ENCODE measurements at regions of chr3 and their contacts with region 1.

Region 1: DNA sequence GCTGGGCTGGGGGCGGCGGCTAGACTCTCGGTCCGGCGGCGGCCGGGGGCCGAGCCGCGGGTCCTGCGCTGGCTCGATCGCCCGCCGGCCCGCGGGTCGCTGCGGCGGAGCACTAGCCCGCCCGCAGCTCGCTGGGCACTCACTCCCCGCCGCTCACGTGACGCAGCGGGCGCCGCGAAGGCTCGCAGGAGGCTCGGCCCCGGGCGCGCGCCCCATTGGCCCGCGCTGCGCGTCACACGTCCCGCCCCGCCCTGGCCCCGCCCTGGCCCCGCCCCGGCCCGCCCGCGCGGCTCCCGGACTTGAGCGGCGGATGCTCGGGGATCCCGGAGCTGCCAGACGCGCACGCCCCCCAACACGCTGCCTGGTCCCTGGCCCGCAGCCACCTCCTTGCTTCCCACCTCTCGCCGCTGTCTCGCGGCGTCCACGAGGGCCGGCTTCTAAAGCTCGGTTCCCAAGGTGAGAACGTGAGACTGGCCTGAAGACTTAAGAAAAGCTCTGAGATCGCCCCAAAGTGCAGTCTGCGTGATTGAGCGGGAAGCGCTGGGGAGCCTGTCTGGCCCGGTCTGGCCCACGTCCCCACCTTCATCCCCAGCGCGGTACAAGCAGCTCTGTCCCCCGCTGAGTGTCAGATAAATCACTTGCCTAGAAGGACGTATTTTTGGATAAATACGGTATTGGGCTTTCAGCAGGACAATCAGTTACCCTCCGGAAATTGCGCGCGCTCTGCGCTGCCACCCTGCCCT is at the start of gene KLF15:
- DNase-seq: peak; percentile 86 to 96
- H3K4me3 ChIP-seq: peak within 1 kb of the TSS; percentile 60 to 100
- H3K27ac ChIP-seq: peak within 1 kb of the TSS; percentile 94 to 100
- H3K4me1 ChIP-seq: peaks cover 0 to 40% (median 33%) of the 10 kb centered on the region in 4 donors
- H3K27me3 ChIP-seq: peaks cover 0 to 6% of the 10 kb centered on the region in 2 donors
- CTCF ChIP-seq: peak in 1 of 2 experiments; percentile 10

Region 2: DNA sequence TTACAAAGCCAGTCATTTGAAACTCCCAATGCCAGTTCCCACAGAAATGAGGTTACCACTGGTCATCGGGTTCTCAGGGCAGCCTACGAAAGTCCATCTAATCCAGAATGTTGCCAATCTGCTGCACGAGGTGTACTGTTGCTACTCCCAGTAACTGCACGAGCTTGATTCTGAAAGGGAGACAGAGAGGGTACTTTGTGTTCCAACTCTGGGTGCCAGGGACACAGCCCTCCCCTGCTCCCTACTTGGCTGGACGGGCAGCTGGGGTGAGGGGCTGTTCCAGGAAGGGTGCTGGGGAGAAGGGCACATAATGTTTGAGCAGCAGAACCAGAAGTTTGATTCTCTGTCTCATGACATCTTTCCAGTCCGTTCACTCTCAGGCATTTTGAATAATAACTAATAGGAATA is 735.1 kb before region 1 on chr3:
- intact Hi-C with region 1: no loop called
- DNase-seq: peak; percentile 45 to 87
- H3K4me3 ChIP-seq: no peak overlapping the region
- H3K27ac ChIP-seq: peak overlapping the region; percentile 63 to 69
- H3K4me1 ChIP-seq: peaks cover 0 to 19% (median 1%) of the 10 kb centered on the region in 4 donors
- H3K27me3 ChIP-seq: no peaks in the 10 kb centered on the region
- CTCF ChIP-seq: no peak

Region 3: GRCh38 chr3:126267226-126267975 is 90.1 kb before region 1 on chr3:
- intact Hi-C with region 1: loop called (anchors 2 kb)
- DNase-seq: peak; percentile 84 to 96
- H3K4me3 ChIP-seq: peak overlapping the region; percentile 38 to 46
- H3K27ac ChIP-seq: peak overlapping the region; percentile 89 to 92
- H3K4me1 ChIP-seq: peaks cover 24 to 76% (median 56%) of the 10 kb centered on the region in 4 donors
- H3K27me3 ChIP-seq: no peaks in the 10 kb centered on the region
- CTCF ChIP-seq: peak; percentile 22 to 28

Region 4: DNA sequence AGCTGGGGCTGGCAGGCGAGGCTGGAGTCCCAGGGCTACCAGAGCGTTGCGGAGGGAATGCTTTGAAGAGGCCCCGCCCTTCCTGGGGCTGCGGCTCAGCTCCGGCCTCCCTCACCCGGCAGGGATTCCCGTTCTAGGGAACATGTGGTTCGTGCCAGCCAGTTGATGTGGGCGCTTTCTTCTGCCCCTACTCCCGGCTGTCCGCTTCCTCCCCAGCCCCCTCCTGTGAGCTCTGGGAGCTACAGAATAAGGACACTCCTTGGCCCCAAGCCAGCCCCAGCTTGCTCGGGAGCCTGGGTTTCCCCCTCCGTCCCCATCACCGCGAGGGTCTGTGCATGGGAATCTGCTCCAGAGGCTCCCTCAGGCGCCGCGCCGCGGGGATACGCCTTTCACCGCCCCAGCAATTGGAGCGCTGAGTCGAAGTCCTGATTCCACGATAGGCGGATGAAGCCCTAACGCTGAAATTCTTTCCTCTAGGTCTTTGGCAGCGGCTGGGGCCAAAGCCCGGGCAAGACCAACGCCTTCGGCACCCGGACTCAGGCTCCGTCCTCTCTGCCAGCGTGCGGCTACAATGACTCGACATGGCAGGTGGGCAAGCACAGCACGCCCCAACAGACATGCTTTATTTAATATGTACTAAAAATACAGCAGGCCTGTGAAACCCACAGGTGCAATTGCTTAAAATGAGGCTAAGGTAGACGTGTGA is 69.8 kb before region 1 on chr3:
- intact Hi-C with region 1: loop called (anchors 5 kb)
- DNase-seq: peak; percentile 62 to 90
- H3K4me3 ChIP-seq: peak overlapping the region; percentile 51 to 64
- H3K27ac ChIP-seq: peak overlapping the region; percentile 90 to 92
- H3K4me1 ChIP-seq: peaks cover 0 to 37% (median 22%) of the 10 kb centered on the region in 4 donors
- H3K27me3 ChIP-seq: no peaks in the 10 kb centered on the region
- CTCF ChIP-seq: peak in 1 of 2 experiments; percentile 7

Region 5: DNA sequence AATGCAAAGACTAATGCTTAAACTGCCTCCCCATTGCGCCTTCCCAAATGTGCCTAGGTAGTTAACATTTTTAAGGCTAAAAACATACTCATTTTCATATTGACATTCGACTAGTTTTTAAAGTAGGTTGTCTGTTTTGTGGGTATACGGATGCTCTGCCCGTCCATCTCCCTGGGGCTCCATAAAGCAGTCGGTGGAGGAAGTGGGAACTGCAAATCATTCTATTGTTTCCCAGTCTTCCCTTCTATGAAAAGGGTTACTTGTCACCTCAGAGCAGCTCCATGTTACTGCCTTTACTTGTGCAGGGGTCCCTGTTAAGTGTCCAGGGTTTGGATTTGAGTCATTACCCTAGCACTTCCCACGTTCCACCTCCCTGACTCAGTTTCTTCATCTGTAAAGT is 357.5 kb after region 1 on chr3:
- intact Hi-C with region 1: no loop called
- DNase-seq: no peak
- H3K4me3 ChIP-seq: no peak overlapping the region
- H3K27ac ChIP-seq: no peak overlapping the region
- H3K4me1 ChIP-seq: no peaks in the 10 kb centered on the region
- H3K27me3 ChIP-seq: no peaks in the 10 kb centered on the region
- CTCF ChIP-seq: no peak

Region 6: DNA sequence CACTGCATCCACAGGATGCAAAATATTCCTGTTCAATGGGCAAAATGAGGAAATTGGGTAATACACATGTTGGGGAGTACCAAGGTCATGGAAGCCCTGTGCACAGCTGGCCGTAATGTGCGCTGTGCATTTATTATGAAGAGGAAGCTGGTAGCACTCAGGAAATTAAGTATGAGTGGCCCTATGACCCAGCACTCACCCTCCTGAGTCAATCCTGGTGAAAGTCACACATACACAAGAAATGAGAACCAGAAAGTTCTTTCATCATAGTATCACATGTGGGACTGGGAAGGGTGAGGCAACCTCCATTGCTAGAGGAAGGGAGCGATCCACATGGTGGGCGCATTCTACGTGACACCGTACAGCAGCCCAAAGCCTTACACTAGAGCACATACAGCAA is 941.8 kb after region 1 on chr3:
- intact Hi-C with region 1: no loop called
- DNase-seq: peak in 1 of 2 donors; percentile 51
- H3K4me3 ChIP-seq: no peak overlapping the region
- H3K27ac ChIP-seq: no peak overlapping the region
- H3K4me1 ChIP-seq: no peaks in the 10 kb centered on the region
- H3K27me3 ChIP-seq: peaks cover 0 to 6% of the 10 kb centered on the region in 2 donors
- CTCF ChIP-seq: no peak